BJ (cell line): ENCODE measurements at regions of chr5 and their contacts with region 1.

Region 1: GRCh38 chr5:126656396-126657007 is 55.8 kb downstream of the PHAX start:
- DNase-seq: no peak
- H3K4me3 ChIP-seq: no peak overlapping the region
- H3K27me3 ChIP-seq: no peaks in the 10 kb centered on the region
- CTCF ChIP-seq: peak; percentile 89

Region 2: DNA sequence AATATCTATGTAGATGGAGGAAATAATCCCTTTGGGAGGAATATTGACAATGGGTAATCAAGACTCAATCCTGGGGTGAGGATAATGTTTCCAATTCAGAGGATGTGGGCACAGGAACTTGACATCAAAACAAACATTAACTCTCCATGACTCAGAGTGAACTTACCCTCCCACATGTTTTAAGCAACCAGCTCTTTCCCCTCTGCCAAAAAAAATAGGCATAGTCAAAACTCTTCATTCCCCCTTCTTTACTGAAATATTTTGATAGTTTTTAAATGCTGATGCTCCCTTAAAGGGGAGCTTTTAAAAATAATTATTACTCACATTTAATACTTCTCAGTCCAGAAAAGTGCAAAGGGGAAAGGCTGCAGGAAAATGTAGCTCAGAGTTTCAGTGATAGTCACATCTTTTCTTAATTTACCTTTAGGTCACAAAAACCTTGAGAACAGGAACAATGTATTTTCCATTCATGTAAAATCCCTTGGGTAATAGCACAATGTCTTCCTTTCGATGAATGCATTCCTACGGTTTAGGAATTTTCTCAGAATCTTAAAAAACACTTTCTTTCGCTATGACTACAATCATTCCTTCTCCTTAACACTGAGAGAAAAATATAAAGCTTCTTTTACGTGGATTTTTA is 531.7 kb before region 1 on chr5:
- CTCF ChIA-PET with region 1: no interaction called
- POLR2A ChIA-PET with region 1: no interaction called
- DNase-seq: no peak
- H3K4me3 ChIP-seq: no peak overlapping the region
- H3K27me3 ChIP-seq: no peaks in the 10 kb centered on the region
- CTCF ChIP-seq: no peak

Region 3: GRCh38 chr5:126395198-126395597 is 261.3 kb before region 1 on chr5:
- CTCF ChIA-PET with region 1: no interaction called
- POLR2A ChIA-PET with region 1: no interaction called
- DNase-seq: no peak
- H3K4me3 ChIP-seq: no peak overlapping the region
- H3K27me3 ChIP-seq: no peaks in the 10 kb centered on the region
- CTCF ChIP-seq: no peak

Region 4: DNA sequence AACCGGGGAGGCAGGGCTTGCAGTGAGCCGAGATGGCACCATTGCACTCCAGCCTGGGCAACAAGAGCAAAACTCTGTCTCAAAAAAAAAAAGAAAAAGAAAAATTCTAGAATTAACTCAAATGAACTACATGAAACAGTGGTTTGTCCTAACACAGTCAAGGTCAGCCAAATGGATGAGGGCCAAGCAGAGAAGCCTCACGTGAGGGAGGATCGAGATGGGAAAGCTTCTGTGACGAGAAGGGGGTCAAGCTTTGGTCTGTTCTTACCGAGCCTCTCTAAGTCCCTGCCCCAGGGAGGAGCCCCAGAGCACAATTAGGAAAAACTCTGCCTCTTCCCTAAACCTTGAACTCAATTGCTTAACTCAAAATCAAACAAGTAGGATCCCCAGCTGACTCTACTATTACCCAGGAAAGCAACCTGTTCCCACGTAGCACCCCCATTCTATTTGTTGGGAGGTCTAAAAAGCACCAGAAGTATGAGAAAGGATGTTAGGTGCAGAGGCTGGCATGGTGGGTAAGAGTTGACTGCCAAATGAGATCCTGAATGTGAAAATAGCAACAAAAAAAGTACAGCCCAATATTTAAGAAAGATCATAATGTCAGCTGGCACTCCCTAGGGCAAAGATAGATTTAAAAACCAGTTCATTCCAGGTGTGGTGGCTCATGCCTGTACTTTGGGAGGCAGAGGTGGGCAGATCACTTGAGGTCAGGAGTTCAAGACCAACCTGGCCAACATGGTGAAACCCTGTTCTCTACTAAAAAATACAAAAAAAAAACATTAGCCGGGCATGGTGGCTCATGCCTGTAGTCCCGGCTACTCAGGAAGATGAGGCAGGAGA is 68.7 kb before region 1 on chr5:
- CTCF ChIA-PET with region 1: no interaction called
- POLR2A ChIA-PET with region 1: interaction called, 14 read pairs
- DNase-seq: no peak
- H3K4me3 ChIP-seq: no peak overlapping the region
- H3K27me3 ChIP-seq: no peaks in the 10 kb centered on the region
- CTCF ChIP-seq: no peak

Region 5: DNA sequence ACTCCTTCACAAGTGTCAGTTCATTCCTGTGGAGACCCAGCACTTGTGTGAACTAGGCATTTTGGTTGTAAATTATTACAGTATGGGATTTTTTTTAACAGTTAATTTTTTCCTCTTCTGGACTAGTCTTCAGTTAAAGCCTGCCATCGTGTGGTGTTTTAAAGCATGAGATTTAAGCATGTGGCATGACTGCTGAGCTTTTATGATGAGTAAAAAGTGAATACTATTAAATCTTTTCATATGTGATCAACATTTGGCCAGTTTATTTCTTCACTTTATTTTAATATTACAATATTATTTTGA is 145.4 kb after region 1 on chr5:
- CTCF ChIA-PET with region 1: interaction called, 28 read pairs
- POLR2A ChIA-PET with region 1: interaction called, 3 read pairs
- DNase-seq: no peak
- H3K4me3 ChIP-seq: no peak overlapping the region
- H3K27me3 ChIP-seq: no peaks in the 10 kb centered on the region
- CTCF ChIP-seq: peak; percentile 57

Region 6: GRCh38 chr5:127386557-127386956 is 730.1 kb after region 1 on chr5:
- CTCF ChIA-PET with region 1: no interaction called
- POLR2A ChIA-PET with region 1: no interaction called
- DNase-seq: peak; percentile 24
- H3K4me3 ChIP-seq: no peak overlapping the region
- H3K27me3 ChIP-seq: no peaks in the 10 kb centered on the region
- CTCF ChIP-seq: no peak